Psoas muscle (tissue), 8 donors: ENCODE measurements at regions of chr9 and their contacts with region 1.

Region 1: GRCh38 chr9:116149844-116150243 is 3.7 kb upstream of the PAPPA start:
- DNase-seq: no peak
- ATAC-seq: peak; percentile 60 to 82 (median 76)
- H3K4me3 ChIP-seq: no peak overlapping the region
- H3K27ac ChIP-seq: no peak overlapping the region
- H3K4me1 ChIP-seq: peaks cover 3% of the 10 kb centered on the region
- H3K27me3 ChIP-seq: peaks cover 3 to 29% (median 3%) of the 10 kb centered on the region in 3 donors
- CTCF ChIP-seq: peak; percentile 51

Region 2: DNA sequence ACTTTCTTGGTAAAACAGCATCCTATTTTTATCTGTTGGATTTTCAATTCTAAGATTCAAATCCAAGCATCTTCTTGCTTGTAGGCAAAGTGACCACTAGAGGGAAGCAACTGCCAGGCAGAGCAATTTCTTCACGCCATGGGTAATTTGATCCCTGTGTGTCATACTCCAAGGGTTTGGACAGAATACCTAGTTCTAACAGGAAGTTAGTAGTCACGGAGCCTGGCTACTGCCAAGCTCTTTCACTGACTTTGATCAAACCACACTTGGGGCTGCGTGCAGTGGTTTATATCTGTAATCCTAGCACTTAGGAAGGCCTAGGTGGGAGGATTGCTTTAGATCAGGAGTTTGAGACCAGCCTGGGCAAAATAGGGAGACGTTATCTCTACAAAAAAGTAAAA is 558.3 kb before region 1 on chr9:
- intact Hi-C with region 1: loop called (anchors 5 to 10 kb)
- DNase-seq: peak; percentile 60 to 71
- ATAC-seq: peak; percentile 79 to 98 (median 98)
- H3K4me3 ChIP-seq: no peak overlapping the region
- H3K27ac ChIP-seq: no peak overlapping the region
- H3K4me1 ChIP-seq: no peaks in the 10 kb centered on the region
- H3K27me3 ChIP-seq: peaks cover 0 to 8% (median 2%) of the 10 kb centered on the region in 3 donors
- CTCF ChIP-seq: peak; percentile 33

Region 3: GRCh38 chr9:116087246-116087645 is 62.6 kb before region 1 on chr9:
- intact Hi-C with region 1: loop called in 1 of 2 experiments (anchors 5 kb)
- DNase-seq: peak; percentile 35 to 64
- ATAC-seq: peak; percentile 95 to 98 (median 96)
- H3K4me3 ChIP-seq: no peak overlapping the region
- H3K27ac ChIP-seq: peak overlapping the region; percentile 59
- H3K4me1 ChIP-seq: peaks cover 23% of the 10 kb centered on the region
- H3K27me3 ChIP-seq: no peaks in the 10 kb centered on the region
- CTCF ChIP-seq: no peak

Region 4: GRCh38 chr9:116103976-116104820 is 45.6 kb before region 1 on chr9:
- intact Hi-C with region 1: no loop called
- DNase-seq: no peak
- ATAC-seq: no peak
- H3K4me3 ChIP-seq: no peak overlapping the region
- H3K27ac ChIP-seq: no peak overlapping the region
- H3K4me1 ChIP-seq: no peaks in the 10 kb centered on the region
- H3K27me3 ChIP-seq: peaks cover 0 to 2% (median 0%) of the 10 kb centered on the region in 3 donors
- CTCF ChIP-seq: no peak

Region 5: GRCh38 chr9:116494815-116495634 is 345.2 kb after region 1 on chr9:
- intact Hi-C with region 1: loop called in 1 of 2 experiments (anchors 10 kb)
- DNase-seq: no peak
- ATAC-seq: peak in 2 of 4 donors; percentile 65 to 72
- H3K4me3 ChIP-seq: no peak overlapping the region
- H3K27ac ChIP-seq: no peak overlapping the region
- H3K4me1 ChIP-seq: no peaks in the 10 kb centered on the region
- H3K27me3 ChIP-seq: no peaks in the 10 kb centered on the region
- CTCF ChIP-seq: peak; percentile 68

Region 6: DNA sequence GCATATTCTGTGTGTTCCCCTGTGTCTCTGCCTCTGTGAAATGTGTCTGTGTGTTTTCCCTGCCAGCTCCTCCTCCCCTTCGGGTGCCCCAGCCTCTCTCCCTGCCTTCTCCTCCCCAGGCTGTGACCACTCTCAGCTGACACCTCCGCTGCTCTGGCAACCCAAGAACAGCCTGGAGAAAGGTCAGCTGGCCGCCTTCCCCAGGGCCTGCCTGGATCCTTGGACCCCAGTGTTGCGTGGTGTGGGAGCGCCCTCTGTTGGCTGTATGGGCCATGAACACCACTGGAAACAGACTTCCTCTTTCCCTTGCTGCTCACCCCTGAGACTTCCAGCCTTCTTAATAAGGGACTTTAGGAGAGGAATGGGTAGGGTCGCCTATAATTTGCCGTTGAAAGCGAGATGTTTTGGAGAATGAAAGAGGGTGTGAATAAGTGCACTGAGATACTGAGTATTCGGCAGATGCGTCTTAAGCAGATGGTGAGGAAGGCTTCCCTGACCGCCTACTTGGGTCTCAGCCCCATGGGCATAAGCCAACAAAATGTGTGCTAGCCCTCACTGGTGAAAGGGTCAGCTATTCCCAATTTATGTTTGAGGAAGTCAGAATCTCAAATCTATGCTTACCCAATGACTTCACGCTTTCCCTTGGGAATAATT is 422.4 kb after region 1 on chr9:
- intact Hi-C with region 1: loop called (anchors 2 to 5 kb)
- DNase-seq: peak; percentile 90 to 95
- ATAC-seq: peak; percentile 97 to 100 (median 98)
- H3K4me3 ChIP-seq: no peak overlapping the region
- H3K27ac ChIP-seq: no peak overlapping the region
- H3K4me1 ChIP-seq: no peaks in the 10 kb centered on the region
- H3K27me3 ChIP-seq: no peaks in the 10 kb centered on the region
- CTCF ChIP-seq: peak; percentile 86

Region 7: GRCh38 chr9:116646661-116647512 is 497.0 kb after region 1 on chr9:
- intact Hi-C with region 1: loop called in 1 of 2 experiments (anchors 5 kb)
- DNase-seq: no peak
- ATAC-seq: peak in 3 of 4 donors; percentile 65 to 76 (median 74)
- H3K4me3 ChIP-seq: no peak overlapping the region
- H3K27ac ChIP-seq: no peak overlapping the region
- H3K4me1 ChIP-seq: peaks cover 37% of the 10 kb centered on the region
- H3K27me3 ChIP-seq: no peaks in the 10 kb centered on the region
- CTCF ChIP-seq: peak; percentile 49

Region 8: DNA sequence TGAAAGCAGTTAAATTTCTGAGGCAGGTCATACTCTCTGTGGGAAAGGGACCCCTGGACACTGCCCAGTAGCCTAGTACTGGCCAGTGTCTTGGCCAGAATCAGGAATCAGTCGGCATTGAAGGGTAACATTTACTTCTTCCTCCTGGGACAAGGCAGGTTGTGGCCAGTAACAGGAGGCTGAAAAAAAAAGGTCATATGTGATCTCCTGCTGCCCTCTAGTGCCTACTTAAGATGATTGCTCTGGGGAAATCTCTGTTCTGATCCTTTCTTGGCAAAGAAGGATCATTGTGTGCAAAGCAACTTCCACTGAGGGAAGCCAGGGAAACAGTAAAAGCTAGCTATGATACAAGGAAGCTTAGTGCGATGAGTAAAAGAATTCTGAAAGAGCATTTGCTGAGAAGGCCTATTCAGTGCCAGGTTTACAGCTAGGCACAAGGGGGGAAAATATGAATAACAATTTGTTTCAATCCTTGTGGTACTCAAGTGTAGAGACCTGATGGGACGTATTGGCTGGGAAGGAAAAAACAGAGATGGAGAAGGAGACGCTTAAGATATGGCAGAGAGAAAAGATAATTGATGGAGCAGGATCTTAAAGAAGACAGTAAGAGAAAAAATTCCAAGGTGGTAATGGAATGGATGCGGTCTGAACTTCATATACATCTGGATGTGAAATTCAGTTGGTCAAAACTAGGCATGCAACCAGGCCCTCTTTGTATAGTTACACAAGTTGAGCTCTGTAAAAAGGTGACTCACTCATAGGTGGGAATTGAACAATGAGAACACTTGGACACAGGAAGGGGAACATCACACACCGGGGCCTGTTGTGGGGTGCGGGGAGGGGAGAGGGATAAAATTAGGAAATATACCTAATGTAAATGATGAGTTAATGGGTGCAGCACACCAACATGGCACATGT is 511.5 kb after region 1 on chr9:
- intact Hi-C with region 1: loop called in 1 of 2 experiments (anchors 2 kb)
- DNase-seq: no peak
- ATAC-seq: peak; percentile 78 to 95 (median 90)
- H3K4me3 ChIP-seq: no peak overlapping the region
- H3K27ac ChIP-seq: no peak overlapping the region
- H3K4me1 ChIP-seq: peaks cover 10% of the 10 kb centered on the region
- H3K27me3 ChIP-seq: no peaks in the 10 kb centered on the region
- CTCF ChIP-seq: peak; percentile 78